ENCODE measurements at regions of chr12 and their contacts with region 1.

Region 1: GRCh38 chr12:54958048-54958658 is 26.4 kb downstream of the TESPA1 start:
- DNase-seq: peak; percentile 88
- H3K4me3 Mint-ChIP-seq: peak overlapping the region; percentile 7
- H3K27ac Mint-ChIP-seq: peak overlapping the region; percentile 25
- H3K4me1 Mint-ChIP-seq: peaks cover 74% of the 10 kb centered on the region
- H3K27me3 Mint-ChIP-seq: no peaks in the 10 kb centered on the region

Region 2: GRCh38 chr12:54701940-54702592 is 256.1 kb before region 1 on chr12:
- intact Hi-C with region 1: loop called (anchors 1 kb)
- DNase-seq: peak; percentile 79
- H3K4me3 Mint-ChIP-seq: no peak overlapping the region
- H3K27ac Mint-ChIP-seq: no peak overlapping the region
- H3K4me1 Mint-ChIP-seq: no peaks in the 10 kb centered on the region
- H3K27me3 Mint-ChIP-seq: peaks cover 20% of the 10 kb centered on the region

Region 3: GRCh38 chr12:54723379-54724256 is 234.5 kb before region 1 on chr12:
- intact Hi-C with region 1: loop called (anchors 1 kb)
- DNase-seq: peak; percentile 82
- H3K4me3 Mint-ChIP-seq: no peak overlapping the region
- H3K27ac Mint-ChIP-seq: no peak overlapping the region
- H3K4me1 Mint-ChIP-seq: peaks cover 5% of the 10 kb centered on the region
- H3K27me3 Mint-ChIP-seq: peaks cover 35% of the 10 kb centered on the region

Region 4: DNA sequence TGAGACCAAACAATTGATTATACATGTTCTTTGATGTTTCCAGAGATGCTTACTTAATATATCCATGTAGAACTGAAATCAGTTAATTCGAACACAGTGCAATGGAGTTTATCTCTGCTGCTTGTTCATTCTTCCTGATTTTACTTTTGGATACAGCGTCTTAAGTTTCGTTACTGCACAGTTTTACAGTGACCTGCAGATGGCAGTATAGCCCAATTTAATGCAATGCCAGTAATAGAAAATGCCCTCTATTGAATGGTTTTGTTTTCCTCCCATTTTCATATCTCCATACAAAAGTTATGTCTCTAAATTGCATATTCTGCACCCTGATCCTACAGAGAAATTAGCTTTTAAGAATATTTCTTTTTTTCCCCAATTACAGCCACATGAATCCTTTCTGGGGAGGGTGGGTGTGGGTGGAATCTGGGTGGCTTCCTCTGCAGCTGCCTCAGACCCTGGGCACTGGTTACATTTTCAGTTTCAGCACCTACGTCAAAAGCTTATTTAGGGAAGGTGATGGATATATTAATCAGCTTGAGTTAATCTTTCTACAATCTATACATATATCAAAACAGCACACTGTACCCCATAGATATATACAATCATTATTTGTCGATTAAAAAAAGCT is 208.8 kb before region 1 on chr12:
- intact Hi-C with region 1: loop called (anchors 1 kb)
- DNase-seq: peak; percentile 84
- H3K4me3 Mint-ChIP-seq: peak overlapping the region; percentile 41
- H3K27ac Mint-ChIP-seq: no peak overlapping the region
- H3K4me1 Mint-ChIP-seq: peaks cover 16% of the 10 kb centered on the region
- H3K27me3 Mint-ChIP-seq: peaks cover 20% of the 10 kb centered on the region

Region 5: DNA sequence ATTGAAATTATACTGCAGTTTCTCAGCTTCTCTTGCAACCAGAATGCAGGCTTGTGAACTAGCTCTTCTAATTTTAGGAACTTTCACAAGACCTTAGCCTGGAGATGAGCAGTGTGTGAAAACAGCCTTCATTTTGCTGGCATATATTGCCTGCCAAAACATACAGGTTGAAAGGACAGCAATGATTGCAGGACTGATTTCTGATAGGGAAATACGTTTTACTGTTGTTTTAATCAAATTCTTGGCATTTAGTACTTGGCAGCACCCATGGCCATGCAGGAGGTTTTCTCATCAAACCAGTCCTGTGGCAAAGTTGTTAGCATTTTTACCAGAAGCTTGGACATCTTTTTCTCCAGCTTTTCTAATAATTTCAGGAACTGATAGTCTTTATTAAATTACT is 195.8 kb before region 1 on chr12:
- intact Hi-C with region 1: no loop called
- DNase-seq: no peak
- H3K4me3 Mint-ChIP-seq: no peak overlapping the region
- H3K27ac Mint-ChIP-seq: no peak overlapping the region
- H3K4me1 Mint-ChIP-seq: peaks cover 11% of the 10 kb centered on the region
- H3K27me3 Mint-ChIP-seq: no peaks in the 10 kb centered on the region

Region 6: DNA sequence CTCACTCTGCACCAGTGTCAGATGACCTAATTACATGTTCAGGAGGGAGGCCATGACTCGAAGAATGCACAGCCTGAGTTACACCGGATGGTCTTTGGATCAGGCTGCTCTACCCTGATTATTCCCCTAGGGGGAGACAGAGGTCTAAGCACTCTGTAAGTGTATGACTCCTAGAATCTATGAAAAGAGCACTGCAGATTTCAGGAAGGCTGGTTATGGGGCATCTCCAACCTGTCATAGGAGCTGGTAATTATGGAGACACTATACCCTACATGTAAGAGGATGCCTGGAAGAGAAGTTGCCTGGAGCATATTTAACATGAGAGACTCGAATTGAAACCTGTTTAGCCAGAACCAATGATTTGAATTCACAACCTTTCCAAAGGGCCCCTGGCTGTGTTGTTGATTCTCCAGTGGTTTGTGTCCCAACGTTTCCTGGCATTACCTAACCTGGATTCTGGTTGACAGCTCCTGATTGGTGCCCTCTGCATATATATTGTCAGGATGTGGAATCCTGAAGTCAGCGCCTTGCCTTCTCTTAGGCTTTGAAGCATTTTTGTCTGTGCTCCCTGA is 104.1 kb before region 1 on chr12 and contains the start of gene MUCL1:
- intact Hi-C with region 1: loop called (anchors 1 kb)
- DNase-seq: peak; percentile 93
- H3K4me3 Mint-ChIP-seq: no peak within 1 kb of the TSS
- H3K27ac Mint-ChIP-seq: no peak within 1 kb of the TSS
- H3K4me1 Mint-ChIP-seq: peaks cover 20% of the 10 kb centered on the region
- H3K27me3 Mint-ChIP-seq: peaks cover 5% of the 10 kb centered on the region
- total RNA-seq, gene MUCL1: 0.54 and 0.84 TPM in 2 replicates

Region 7: DNA sequence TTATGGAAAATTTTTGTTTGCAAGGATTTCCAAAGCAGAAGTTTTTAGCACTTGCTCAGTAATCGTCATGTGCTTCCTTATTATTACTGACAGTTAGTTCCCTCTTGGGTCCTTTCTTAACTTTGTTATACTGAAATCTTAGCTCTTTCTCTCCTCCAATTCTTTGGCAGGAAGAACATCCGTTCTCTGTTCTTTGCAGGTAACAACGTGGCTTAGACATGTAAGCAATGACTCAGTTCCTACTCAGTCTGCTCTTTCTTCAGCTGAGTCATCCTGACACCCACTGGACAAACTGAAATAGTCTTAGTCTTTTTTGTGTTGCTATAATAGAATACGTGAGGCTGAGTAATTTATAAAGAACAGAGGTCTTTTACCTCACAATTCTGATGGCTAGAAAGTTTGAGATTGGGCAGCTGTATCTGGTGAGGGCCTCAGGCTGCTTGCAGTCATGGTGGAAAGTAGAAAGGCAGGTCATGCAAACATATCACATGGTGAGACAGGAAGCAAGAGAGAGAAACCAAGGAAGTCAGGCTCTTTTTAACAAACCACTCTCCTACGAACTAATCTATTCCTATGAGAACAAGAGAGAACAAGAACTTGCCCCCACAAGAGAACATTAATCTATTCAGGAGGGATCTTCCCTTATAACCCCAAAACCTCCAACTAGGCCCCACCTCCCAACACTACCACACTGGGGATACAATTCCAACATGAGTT is 22.8 kb before region 1 on chr12:
- intact Hi-C with region 1: loop called (anchors 2 kb)
- DNase-seq: peak; percentile 83
- H3K4me3 Mint-ChIP-seq: peak overlapping the region; percentile 56
- H3K27ac Mint-ChIP-seq: peak overlapping the region; percentile 92
- H3K4me1 Mint-ChIP-seq: peaks cover 50% of the 10 kb centered on the region
- H3K27me3 Mint-ChIP-seq: no peaks in the 10 kb centered on the region

Region 8: DNA sequence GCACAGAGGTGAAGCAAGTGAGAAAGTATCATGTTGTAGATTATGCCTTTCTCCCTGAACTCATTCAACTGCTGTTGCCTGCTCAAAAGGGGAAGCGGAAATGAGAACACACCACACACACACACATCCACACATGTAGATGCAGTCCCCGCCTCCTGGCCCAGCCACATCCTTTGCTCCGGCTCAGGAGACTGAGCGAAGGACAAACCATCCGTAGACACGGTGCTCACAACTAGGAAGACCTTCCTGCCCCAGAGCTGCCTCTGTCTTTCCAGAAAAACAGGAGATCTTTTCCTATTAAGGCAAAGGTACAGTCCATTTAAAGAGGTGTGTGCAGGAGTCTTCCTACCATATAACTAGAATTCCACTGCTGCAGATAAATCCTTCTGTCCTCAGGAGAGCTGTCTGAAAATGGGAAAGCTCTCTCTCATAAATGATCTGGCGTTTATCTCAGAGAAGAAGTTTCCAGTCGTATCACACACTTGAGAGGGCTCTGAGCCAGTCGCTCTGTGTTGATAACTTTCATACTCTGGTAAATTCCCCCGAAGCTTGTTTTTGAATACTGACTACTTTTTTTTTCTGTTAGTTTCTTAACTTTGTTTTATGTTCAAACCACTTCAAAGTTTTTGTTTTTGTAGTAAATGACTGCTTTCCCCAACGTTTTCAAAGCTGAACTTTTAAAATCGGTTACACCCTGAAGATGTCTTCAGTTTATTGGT is 26.7 kb after region 1 on chr12 and contains the start of gene TESPA1:
- intact Hi-C with region 1: loop called (anchors 1 kb)
- DNase-seq: peak; percentile 95
- H3K4me3 Mint-ChIP-seq: peak within 1 kb of the TSS; percentile 86
- H3K27ac Mint-ChIP-seq: peak within 1 kb of the TSS; percentile 97
- H3K4me1 Mint-ChIP-seq: peaks cover 61% of the 10 kb centered on the region
- H3K27me3 Mint-ChIP-seq: no peaks in the 10 kb centered on the region
- total RNA-seq, gene TESPA1: 164 and 168 TPM in 2 replicates

Measured in activated CD4-positive, alpha-beta T cell treated with anti-CD3 and anti-CD28 coated beads, Interleukin-2, amount 10 ng/mL, durations not matched to agents 24 days and 14 days (primary cell).